ENCODE measurements at regions of chr2 and their contacts with region 1.

Region 1: DNA sequence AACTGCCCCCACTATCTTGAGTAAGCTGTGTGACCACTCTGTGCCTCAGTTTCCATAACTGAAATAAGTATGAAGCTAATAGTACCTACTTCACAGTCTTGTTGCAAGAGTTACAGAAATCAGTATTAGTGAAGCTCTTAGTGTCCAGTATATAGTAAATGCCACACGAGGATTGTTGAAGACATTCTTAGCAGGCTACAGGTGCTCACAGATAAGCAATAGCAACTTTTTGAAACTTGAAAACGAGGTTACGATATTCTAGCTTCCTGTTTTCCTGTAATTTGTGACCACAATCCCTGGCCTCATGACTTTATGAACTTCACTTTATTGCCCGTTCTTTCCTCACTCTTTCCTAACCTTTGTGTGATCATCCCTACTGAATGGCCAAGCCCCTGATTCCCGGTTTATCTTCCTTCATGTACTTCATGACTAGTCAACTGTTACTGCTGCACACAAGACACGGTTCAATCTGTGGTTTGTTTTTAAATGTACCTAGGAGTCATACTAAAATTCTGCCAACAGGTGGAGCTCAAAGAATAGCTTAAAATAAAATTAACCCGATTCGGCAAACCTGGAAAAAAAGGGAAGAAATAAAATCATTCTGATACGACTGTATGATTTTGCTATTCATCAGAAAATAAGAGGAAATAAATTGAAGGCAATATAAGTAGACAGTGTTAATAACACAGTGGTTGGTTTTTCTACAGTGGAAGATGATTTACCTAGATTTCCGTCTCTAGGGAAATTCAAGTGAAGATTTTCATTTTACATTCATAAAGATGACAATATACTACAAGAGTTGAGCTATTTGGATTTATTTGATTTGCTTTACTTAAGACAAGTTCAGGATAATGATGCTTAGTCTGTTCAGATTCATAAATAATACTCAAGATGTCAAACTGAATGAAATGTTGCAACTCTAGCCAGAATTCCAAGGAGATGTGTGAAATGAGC is 38.1 kb upstream of the STAT1 start:
- DNase-seq: no peak
- H3K4me3 Mint-ChIP-seq: no peak overlapping the region
- H3K27ac Mint-ChIP-seq: no peak overlapping the region
- H3K4me1 Mint-ChIP-seq: peaks cover 21% of the 10 kb centered on the region
- H3K27me3 Mint-ChIP-seq: no peaks in the 10 kb centered on the region

Region 2: GRCh38 chr2:190649798-190650390 is 402.2 kb before region 1 on chr2:
- CTCF ChIA-PET with region 1: no interaction called
- DNase-seq: no peak
- H3K4me3 Mint-ChIP-seq: peak overlapping the region; percentile 97
- H3K27ac Mint-ChIP-seq: peak overlapping the region; percentile 87
- H3K4me1 Mint-ChIP-seq: peaks cover 26% of the 10 kb centered on the region
- H3K27me3 Mint-ChIP-seq: peaks cover 10% of the 10 kb centered on the region

Region 3: DNA sequence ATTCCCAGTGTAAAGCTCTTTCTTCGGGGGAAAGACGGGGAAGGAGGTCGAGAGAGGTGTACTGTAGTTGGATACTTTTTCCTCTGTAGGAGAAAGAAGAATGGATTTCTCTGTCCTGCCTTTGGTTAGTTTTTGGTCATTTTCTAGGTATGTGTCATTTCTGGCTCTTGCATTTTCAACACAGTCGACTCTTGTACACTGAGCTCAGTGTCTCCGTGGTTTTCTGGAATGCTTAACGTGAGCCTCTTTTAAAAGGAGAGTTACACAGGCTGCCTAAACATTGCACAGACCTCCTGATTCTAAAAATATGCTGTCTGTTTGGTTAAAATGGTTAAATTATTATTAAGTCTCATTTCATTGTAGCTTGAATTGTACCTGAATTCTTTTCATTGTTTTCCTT is 193.3 kb before region 1 on chr2:
- CTCF ChIA-PET with region 1: no interaction called
- DNase-seq: no peak
- H3K4me3 Mint-ChIP-seq: no peak overlapping the region
- H3K27ac Mint-ChIP-seq: no peak overlapping the region
- H3K4me1 Mint-ChIP-seq: peaks cover 14% of the 10 kb centered on the region
- H3K27me3 Mint-ChIP-seq: no peaks in the 10 kb centered on the region

Region 4: GRCh38 chr2:191038241-191038725 is 13.8 kb before region 1 on chr2:
- CTCF ChIA-PET with region 1: interaction called, 17 read pairs
- DNase-seq: peak; percentile 29
- H3K4me3 Mint-ChIP-seq: no peak overlapping the region
- H3K27ac Mint-ChIP-seq: peak overlapping the region; percentile 77
- H3K4me1 Mint-ChIP-seq: peaks cover 39% of the 10 kb centered on the region
- H3K27me3 Mint-ChIP-seq: no peaks in the 10 kb centered on the region

Region 5: DNA sequence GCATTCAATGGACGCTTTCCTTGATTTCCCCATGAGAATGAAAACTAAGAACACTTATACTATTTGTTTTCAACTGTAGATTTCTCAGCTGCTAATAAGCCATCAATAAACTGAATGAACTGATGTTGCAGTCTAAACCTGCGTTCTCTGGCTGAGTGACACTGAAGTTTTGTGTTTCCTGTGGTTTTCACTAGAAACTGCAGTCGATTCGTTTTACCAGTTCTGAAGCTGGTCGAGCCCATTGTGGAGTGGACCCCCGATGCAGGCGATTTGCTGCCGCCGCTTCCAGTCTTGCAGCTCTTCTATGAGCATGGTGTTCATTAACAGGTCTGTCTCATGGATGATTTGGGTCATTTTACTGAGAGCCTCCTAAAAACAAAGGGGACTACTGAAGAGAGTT is 12.5 kb after region 1 on chr2:
- CTCF ChIA-PET with region 1: interaction called, 49 read pairs
- DNase-seq: peak; percentile 76
- H3K4me3 Mint-ChIP-seq: peak overlapping the region; percentile 87
- H3K27ac Mint-ChIP-seq: peak overlapping the region; percentile 93
- H3K4me1 Mint-ChIP-seq: peaks cover 78% of the 10 kb centered on the region
- H3K27me3 Mint-ChIP-seq: no peaks in the 10 kb centered on the region

Region 6: GRCh38 chr2:191070276-191070675 is 18.2 kb after region 1 on chr2:
- CTCF ChIA-PET with region 1: interaction called, 49 read pairs
- DNase-seq: no peak
- H3K4me3 Mint-ChIP-seq: peak overlapping the region; percentile 70
- H3K27ac Mint-ChIP-seq: peak overlapping the region; percentile 92
- H3K4me1 Mint-ChIP-seq: peaks cover 67% of the 10 kb centered on the region
- H3K27me3 Mint-ChIP-seq: no peaks in the 10 kb centered on the region

Region 7: GRCh38 chr2:191086706-191087105 is 34.6 kb after region 1 on chr2:
- CTCF ChIA-PET with region 1: no interaction called
- DNase-seq: no peak
- H3K4me3 Mint-ChIP-seq: no peak overlapping the region
- H3K27ac Mint-ChIP-seq: no peak overlapping the region
- H3K4me1 Mint-ChIP-seq: peaks cover 18% of the 10 kb centered on the region
- H3K27me3 Mint-ChIP-seq: no peaks in the 10 kb centered on the region

Region 8: GRCh38 chr2:191145769-191146471 is 93.8 kb after region 1 on chr2:
- CTCF ChIA-PET with region 1: interaction called, 689 read pairs
- DNase-seq: no peak
- H3K4me3 Mint-ChIP-seq: no peak overlapping the region
- H3K27ac Mint-ChIP-seq: no peak overlapping the region
- H3K4me1 Mint-ChIP-seq: peaks cover 60% of the 10 kb centered on the region
- H3K27me3 Mint-ChIP-seq: no peaks in the 10 kb centered on the region

Region 9: DNA sequence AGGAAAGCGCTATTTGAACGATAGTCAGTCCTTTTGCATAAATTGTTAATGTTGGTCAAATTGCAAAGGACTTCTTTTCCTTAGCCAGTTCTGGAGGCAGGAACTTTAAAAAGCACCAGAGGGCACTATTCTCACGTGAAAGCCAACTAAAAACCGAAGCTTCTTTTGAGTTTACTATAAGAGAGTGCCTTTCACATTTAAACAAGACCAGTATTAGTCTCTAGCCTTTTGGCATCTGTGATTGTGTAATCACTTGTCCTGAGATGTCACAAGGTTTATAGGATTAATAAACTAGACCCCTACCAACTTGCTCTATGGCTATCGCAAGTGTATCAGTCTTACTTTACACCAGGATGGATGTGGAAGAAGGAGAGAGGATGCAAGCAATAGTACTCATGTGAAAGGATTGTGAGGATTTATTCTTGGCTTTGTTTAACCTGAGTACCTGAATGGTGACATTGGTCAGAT is 113.1 kb after region 1 on chr2:
- CTCF ChIA-PET with region 1: interaction called, 689 read pairs
- DNase-seq: peak; percentile 24
- H3K4me3 Mint-ChIP-seq: no peak overlapping the region
- H3K27ac Mint-ChIP-seq: no peak overlapping the region
- H3K4me1 Mint-ChIP-seq: peaks cover 12% of the 10 kb centered on the region
- H3K27me3 Mint-ChIP-seq: peaks cover 10% of the 10 kb centered on the region